Activated naive CD4-positive, alpha-beta T cell treated with anti-CD3 and anti-CD28 coated beads for 36 hours (primary cell): ENCODE measurements at regions of chr2 and their contacts with region 1.

Region 1: GRCh38 chr2:181466661-181467576 is 9.7 kb downstream of the ITGA4 start:
- DNase-seq: peak; percentile 92
- H3K4me3 Mint-ChIP-seq: no peak overlapping the region
- H3K27ac Mint-ChIP-seq: peak overlapping the region; percentile 54
- H3K4me1 Mint-ChIP-seq: peaks cover 86% of the 10 kb centered on the region
- H3K27me3 Mint-ChIP-seq: no peaks in the 10 kb centered on the region

Region 2: DNA sequence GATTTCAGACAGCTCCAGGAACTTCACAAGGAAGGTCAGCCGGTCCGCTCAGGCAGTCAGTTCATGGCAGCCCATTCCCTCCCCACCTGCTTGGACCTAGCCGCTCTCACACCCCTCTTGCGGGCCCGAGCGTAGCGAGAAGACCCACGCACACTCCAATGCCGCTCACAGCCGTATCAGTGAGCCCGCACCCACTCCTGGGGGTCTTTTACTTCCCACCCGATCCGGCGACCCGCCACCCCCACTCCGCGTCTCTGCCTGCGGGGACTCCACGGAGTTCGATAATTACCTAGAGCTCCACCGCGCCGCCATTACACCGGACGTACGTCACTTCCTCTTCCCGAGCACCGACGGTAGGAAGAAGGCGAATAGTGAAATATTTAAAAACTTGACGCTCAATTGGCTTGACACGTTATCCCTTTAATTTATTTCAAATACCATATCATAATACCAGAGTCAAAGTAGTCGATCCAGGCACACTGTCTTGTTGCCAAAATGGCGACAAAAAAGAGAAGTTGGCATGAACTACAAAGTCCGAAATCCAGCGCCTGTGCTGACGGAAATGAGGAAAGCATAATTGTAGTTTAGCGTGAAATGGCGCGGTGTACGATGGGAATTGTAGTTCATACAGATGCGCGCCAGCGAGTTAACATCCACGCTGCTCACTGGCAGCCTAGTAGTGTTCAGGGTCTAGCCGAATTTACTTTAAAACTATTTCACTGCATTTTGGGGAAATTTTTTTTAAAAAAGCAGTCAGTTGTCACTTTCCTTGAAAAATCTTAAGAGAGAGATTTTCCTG is 1459.9 kb before region 1 on chr2 and contains the start of gene CWC22:
- CTCF ChIA-PET with region 1: no interaction called
- intact Hi-C with region 1: loop called (anchors 10 kb)
- DNase-seq: peak; percentile 93
- H3K4me3 Mint-ChIP-seq: peak within 1 kb of the TSS; percentile 92
- H3K27ac Mint-ChIP-seq: peak within 1 kb of the TSS; percentile 100
- H3K4me1 Mint-ChIP-seq: peaks cover 36% of the 10 kb centered on the region
- H3K27me3 Mint-ChIP-seq: no peaks in the 10 kb centered on the region
- total RNA-seq, gene CWC22: 20.4 TPM

Region 3: GRCh38 chr2:181046833-181047232 is 420.1 kb before region 1 on chr2:
- CTCF ChIA-PET with region 1: no interaction called
- intact Hi-C with region 1: no loop called
- DNase-seq: no peak
- H3K4me3 Mint-ChIP-seq: no peak overlapping the region
- H3K27ac Mint-ChIP-seq: no peak overlapping the region
- H3K4me1 Mint-ChIP-seq: peaks cover 2% of the 10 kb centered on the region
- H3K27me3 Mint-ChIP-seq: no peaks in the 10 kb centered on the region

Region 4: GRCh38 chr2:181312515-181312927 is 154.4 kb before region 1 on chr2:
- CTCF ChIA-PET with region 1: interaction called, 14 read pairs
- intact Hi-C with region 1: no loop called
- DNase-seq: peak; percentile 43
- H3K4me3 Mint-ChIP-seq: peak overlapping the region; percentile 70
- H3K27ac Mint-ChIP-seq: peak overlapping the region; percentile 89
- H3K4me1 Mint-ChIP-seq: peaks cover 53% of the 10 kb centered on the region
- H3K27me3 Mint-ChIP-seq: no peaks in the 10 kb centered on the region

Region 5: GRCh38 chr2:181430406-181431118 is 36.4 kb before region 1 on chr2:
- CTCF ChIA-PET with region 1: interaction called, 4 read pairs
- intact Hi-C with region 1: loop called (anchors 2 kb)
- DNase-seq: peak; percentile 27
- H3K4me3 Mint-ChIP-seq: no peak overlapping the region
- H3K27ac Mint-ChIP-seq: no peak overlapping the region
- H3K4me1 Mint-ChIP-seq: peaks cover 24% of the 10 kb centered on the region
- H3K27me3 Mint-ChIP-seq: no peaks in the 10 kb centered on the region

Region 6: GRCh38 chr2:183038341-183039300 is 1571.7 kb after region 1 on chr2 and contains the start of gene NCKAP1:
- CTCF ChIA-PET with region 1: no interaction called
- intact Hi-C with region 1: loop called (anchors 10 kb)
- DNase-seq: peak; percentile 87
- H3K4me3 Mint-ChIP-seq: peak within 1 kb of the TSS; percentile 78
- H3K27ac Mint-ChIP-seq: no peak within 1 kb of the TSS
- H3K4me1 Mint-ChIP-seq: peaks cover 22% of the 10 kb centered on the region
- H3K27me3 Mint-ChIP-seq: peaks cover 46% of the 10 kb centered on the region
- total RNA-seq, gene NCKAP1: 10.6 to 11.9 TPM